ENCODE measurements at regions of chr4 and their contacts with region 1.

Region 1: DNA sequence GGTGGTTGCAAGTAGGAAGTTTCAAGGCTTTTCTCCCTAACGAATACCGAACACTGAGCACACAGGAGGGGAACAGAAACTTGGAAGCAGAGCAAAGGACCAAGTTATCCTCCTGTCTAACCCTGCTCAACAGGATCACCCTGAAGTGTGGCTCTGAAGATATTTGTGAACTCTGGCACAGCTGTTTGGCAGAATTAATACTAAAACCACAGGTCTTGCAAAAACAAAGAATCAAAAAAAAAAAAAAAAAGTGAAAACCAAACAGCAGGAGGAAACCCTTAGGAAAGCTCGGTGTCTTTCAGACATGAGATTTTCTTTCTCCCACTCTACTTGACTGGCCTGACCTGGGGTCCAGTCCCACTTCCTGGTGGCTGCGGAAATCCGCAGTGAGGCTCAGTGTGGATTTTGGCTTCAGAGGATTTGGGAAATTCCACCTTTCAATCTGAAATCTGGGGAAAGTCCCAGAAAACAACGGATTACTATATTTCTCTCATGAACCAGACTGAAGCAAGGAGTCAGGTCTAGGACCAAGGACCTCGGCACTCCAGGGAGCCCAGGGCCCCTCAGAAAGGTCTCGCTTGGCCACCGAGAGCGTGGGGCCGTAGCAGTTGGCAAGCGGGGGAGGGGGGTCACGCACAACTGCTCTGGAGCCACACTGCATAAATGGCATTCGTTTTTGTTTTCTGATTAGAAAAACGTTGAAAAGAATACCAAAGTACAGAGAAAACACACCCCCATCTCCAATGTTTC is 867 bp downstream of the TIFA start:
- DNase-seq: no peak
- ATAC-seq: no peak
- H3K4me3 Mint-ChIP-seq: peak overlapping the region; percentile 91
- H3K27ac Mint-ChIP-seq: peak overlapping the region; percentile 93
- H3K4me1 Mint-ChIP-seq: peaks cover 71% of the 10 kb centered on the region
- H3K27me3 Mint-ChIP-seq: no peaks in the 10 kb centered on the region

Region 2: GRCh38 chr4:112231779-112232713 is 52.8 kb before region 1 on chr4 and contains the start of gene AP1AR:
- CTCF ChIA-PET with region 1: interaction called, 3 read pairs
- POLR2A ChIA-PET with region 1: interaction called, 17 read pairs
- DNase-seq: peak; percentile 85
- ATAC-seq: peak; percentile 72
- H3K4me3 Mint-ChIP-seq: peak within 1 kb of the TSS; percentile 84
- H3K27ac Mint-ChIP-seq: peak within 1 kb of the TSS; percentile 99
- H3K4me1 Mint-ChIP-seq: peaks cover 35% of the 10 kb centered on the region
- H3K27me3 Mint-ChIP-seq: peaks cover 3% of the 10 kb centered on the region
- total RNA-seq, gene AP1AR: 10.9 to 13.0 TPM

Region 3: GRCh38 chr4:112296949-112297880 is 12.4 kb after region 1 on chr4 and contains the start of gene ALPK1:
- CTCF ChIA-PET with region 1: interaction called, 6 read pairs
- POLR2A ChIA-PET with region 1: interaction called, 34 read pairs
- DNase-seq: no peak
- ATAC-seq: peak; percentile 84
- H3K4me3 Mint-ChIP-seq: peak within 1 kb of the TSS; percentile 82
- H3K27ac Mint-ChIP-seq: peak within 1 kb of the TSS; percentile 63
- H3K4me1 Mint-ChIP-seq: peaks cover 24% of the 10 kb centered on the region
- H3K27me3 Mint-ChIP-seq: no peaks in the 10 kb centered on the region
- total RNA-seq, gene ALPK1: 11.8 to 14.1 TPM

Region 4: DNA sequence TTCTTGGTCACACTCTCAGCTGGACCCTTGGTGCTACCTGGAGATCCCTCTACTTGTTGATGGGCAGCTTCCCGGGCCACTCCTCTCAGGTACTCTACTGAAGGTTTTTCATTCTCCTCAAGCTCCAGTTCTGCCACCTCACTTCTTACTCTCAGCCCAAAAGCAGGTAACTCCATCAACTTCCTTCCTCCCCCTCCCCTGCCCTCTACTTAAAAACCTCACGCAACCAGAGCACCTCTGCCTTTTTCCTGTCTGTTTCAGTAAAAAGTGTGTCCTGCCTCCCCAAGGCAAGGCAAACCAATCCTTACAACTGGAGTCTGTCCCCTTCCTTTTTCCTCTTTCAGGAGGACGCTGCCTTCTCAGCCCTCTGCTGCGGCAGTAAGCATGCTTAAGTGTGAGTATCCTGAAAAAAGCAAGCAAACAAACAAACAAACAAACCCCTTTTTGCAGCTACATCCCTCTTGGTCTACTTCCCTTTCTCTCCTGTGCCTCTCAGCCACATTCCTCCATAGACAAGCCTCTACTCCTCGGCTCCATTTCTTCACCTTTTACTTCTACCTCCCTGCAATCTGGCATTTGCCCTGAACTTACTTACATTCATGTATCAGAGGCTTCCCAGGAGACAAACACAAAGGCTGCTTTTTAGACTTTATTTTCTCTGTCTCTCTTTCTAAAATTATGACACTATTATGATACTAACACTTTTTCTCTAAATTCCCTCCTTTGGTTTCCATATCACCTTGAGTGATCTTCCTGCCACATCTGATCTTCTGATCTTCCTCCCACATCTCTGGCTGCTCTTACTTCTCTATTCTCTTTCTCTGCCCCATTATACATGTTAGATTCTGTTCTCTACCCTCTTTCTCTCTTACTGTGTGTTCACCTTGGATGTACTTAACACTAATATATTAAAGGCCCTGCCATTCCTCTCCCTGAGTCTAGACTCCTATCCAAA is 17.8 kb after region 1 on chr4:
- CTCF ChIA-PET with region 1: interaction called, 14 read pairs
- POLR2A ChIA-PET with region 1: interaction called, 34 read pairs
- DNase-seq: no peak
- ATAC-seq: peak; percentile 71
- H3K4me3 Mint-ChIP-seq: no peak overlapping the region
- H3K27ac Mint-ChIP-seq: no peak overlapping the region
- H3K4me1 Mint-ChIP-seq: peaks cover 19% of the 10 kb centered on the region
- H3K27me3 Mint-ChIP-seq: no peaks in the 10 kb centered on the region

Region 5: GRCh38 chr4:112312610-112313239 is 27.9 kb after region 1 on chr4:
- CTCF ChIA-PET with region 1: interaction called, 14 read pairs
- POLR2A ChIA-PET with region 1: interaction called, 13 read pairs
- DNase-seq: no peak
- ATAC-seq: no peak
- H3K4me3 Mint-ChIP-seq: no peak overlapping the region
- H3K27ac Mint-ChIP-seq: no peak overlapping the region
- H3K4me1 Mint-ChIP-seq: peaks cover 21% of the 10 kb centered on the region
- H3K27me3 Mint-ChIP-seq: no peaks in the 10 kb centered on the region

Measured in activated CD8-positive, alpha-beta T cell treated with anti-CD3 and anti-CD28 coated beads, Interleukin-2, amount 10 ng/mL, durations not matched to agents 7 days and 5 days (primary cell).